Body of pancreas (tissue), 4 donors: ENCODE measurements at regions of chr17 and their contacts with region 1.

Region 1: DNA sequence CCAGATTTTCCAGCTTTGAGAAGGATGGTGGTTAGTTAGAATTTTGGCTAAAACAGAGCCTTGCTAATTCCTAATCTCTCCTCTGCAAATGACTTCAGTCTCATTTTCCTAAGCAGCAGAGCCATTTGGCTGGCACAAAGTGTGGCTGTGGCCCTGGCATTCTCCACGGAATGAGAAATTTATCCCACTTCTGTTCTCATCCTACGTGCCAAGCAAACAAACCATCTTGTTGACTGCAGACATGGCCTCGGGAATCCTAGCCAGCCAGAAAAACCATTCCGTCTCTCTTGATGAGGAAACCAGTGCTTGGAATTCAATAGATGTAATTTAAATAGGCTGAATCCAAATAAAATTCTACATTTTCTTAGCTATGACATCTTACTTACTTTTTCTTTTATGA is 34.1 kb upstream of the ELAC2 start:
- DNase-seq: no peak
- ATAC-seq: no peak
- H3K4me3 ChIP-seq: no peak overlapping the region
- H3K27ac ChIP-seq: no peak overlapping the region
- H3K4me1 ChIP-seq: no peaks in the 10 kb centered on the region
- H3K27me3 ChIP-seq: no peaks in the 10 kb centered on the region
- CTCF ChIP-seq: no peak
- POLR2A ChIP-seq: no peak

Region 2: GRCh38 chr17:13106171-13106570 is 54.3 kb after region 1 on chr17:
- intact Hi-C with region 1: loop called (anchors 10 kb)
- DNase-seq: no peak
- ATAC-seq: no peak
- H3K4me3 ChIP-seq: no peak overlapping the region
- H3K27ac ChIP-seq: no peak overlapping the region
- H3K4me1 ChIP-seq: no peaks in the 10 kb centered on the region
- H3K27me3 ChIP-seq: no peaks in the 10 kb centered on the region
- CTCF ChIP-seq: no peak
- POLR2A ChIP-seq: no peak